ENCODE measurements at regions of chr1 and their contacts with region 1.

Region 1: GRCh38 chr1:218330043-218330623 is 15.0 kb upstream of the TGFB2 start:
- DNase-seq: peak in 4 of 9 donors; percentile 17 to 41 (median 32)
- ATAC-seq: peak; percentile 73
- H3K4me3 ChIP-seq: no peak overlapping the region
- H3K4me3 Mint-ChIP-seq: no peak overlapping the region
- H3K27ac ChIP-seq: no peak overlapping the region
- H3K27ac Mint-ChIP-seq: no peak overlapping the region
- H3K4me1 ChIP-seq: no peaks in the 10 kb centered on the region
- H3K4me1 Mint-ChIP-seq: peaks cover 0 to 3% (median 0%) of the 10 kb centered on the region in 7 donors
- H3K27me3 ChIP-seq: no peaks in the 10 kb centered on the region
- H3K27me3 Mint-ChIP-seq: no peaks in the 10 kb centered on the region

Region 2: GRCh38 chr1:218351391-218352074 is 21.4 kb after region 1 on chr1:
- CTCF ChIA-PET with region 1: no interaction called
- POLR2A ChIA-PET with region 1: no interaction called
- intact Hi-C with region 1: loop called in 1 of 2 experiments (anchors 2 kb)
- DNase-seq: peak in 6 of 9 donors; percentile 16 to 33 (median 20)
- ATAC-seq: peak; percentile 81
- H3K4me3 ChIP-seq: peak overlapping the region; percentile 32
- H3K4me3 Mint-ChIP-seq: peak overlapping the region; percentile 21 to 86 (median 70)
- H3K27ac ChIP-seq: no peak overlapping the region
- H3K27ac Mint-ChIP-seq: peak overlapping the region in 4 of 9 donors; percentile 7 to 54 (median 18)
- H3K4me1 ChIP-seq: peaks cover 0 to 7% of the 10 kb centered on the region in 2 donors
- H3K4me1 Mint-ChIP-seq: peaks cover 14 to 34% (median 30%) of the 10 kb centered on the region in 7 donors
- H3K27me3 ChIP-seq: no peaks in the 10 kb centered on the region
- H3K27me3 Mint-ChIP-seq: peaks cover 9 to 34% (median 26%) of the 10 kb centered on the region in 5 donors

Region 3: GRCh38 chr1:218521375-218522169 is 191.4 kb after region 1 on chr1:
- CTCF ChIA-PET with region 1: no interaction called
- POLR2A ChIA-PET with region 1: no interaction called
- intact Hi-C with region 1: loop called in 1 of 2 experiments (anchors 1 kb)
- DNase-seq: peak in 3 of 9 donors; percentile 2 to 24 (median 4)
- ATAC-seq: no peak
- H3K4me3 ChIP-seq: no peak overlapping the region
- H3K4me3 Mint-ChIP-seq: no peak overlapping the region
- H3K27ac ChIP-seq: no peak overlapping the region
- H3K27ac Mint-ChIP-seq: peak overlapping the region in 1 of 9 donors; percentile 75
- H3K4me1 ChIP-seq: no peaks in the 10 kb centered on the region
- H3K4me1 Mint-ChIP-seq: no peaks in the 10 kb centered on the region
- H3K27me3 ChIP-seq: no peaks in the 10 kb centered on the region
- H3K27me3 Mint-ChIP-seq: peaks cover 3 to 18% (median 5%) of the 10 kb centered on the region in 5 donors

Region 4: GRCh38 chr1:219416594-219417238 is 1086.6 kb after region 1 on chr1:
- CTCF ChIA-PET with region 1: interaction called, 5 read pairs
- POLR2A ChIA-PET with region 1: interaction called, 4 read pairs
- intact Hi-C with region 1: loop called in 1 of 2 experiments (anchors 1 kb)
- DNase-seq: peak; percentile 2 to 47 (median 25)
- ATAC-seq: peak; percentile 65
- H3K4me3 ChIP-seq: no peak overlapping the region
- H3K4me3 Mint-ChIP-seq: no peak overlapping the region
- H3K27ac ChIP-seq: no peak overlapping the region
- H3K27ac Mint-ChIP-seq: no peak overlapping the region
- H3K4me1 ChIP-seq: no peaks in the 10 kb centered on the region
- H3K4me1 Mint-ChIP-seq: no peaks in the 10 kb centered on the region
- H3K27me3 ChIP-seq: no peaks in the 10 kb centered on the region
- H3K27me3 Mint-ChIP-seq: peaks cover 0 to 4% (median 0%) of the 10 kb centered on the region in 5 donors

Region 5: GRCh38 chr1:219812491-219813203 is 1482.5 kb after region 1 on chr1:
- CTCF ChIA-PET with region 1: no interaction called
- POLR2A ChIA-PET with region 1: no interaction called
- intact Hi-C with region 1: loop called in 1 of 2 experiments (anchors 5 kb)
- DNase-seq: no peak
- ATAC-seq: no peak
- H3K4me3 ChIP-seq: no peak overlapping the region
- H3K4me3 Mint-ChIP-seq: no peak overlapping the region
- H3K27ac ChIP-seq: no peak overlapping the region
- H3K27ac Mint-ChIP-seq: no peak overlapping the region
- H3K4me1 ChIP-seq: no peaks in the 10 kb centered on the region
- H3K4me1 Mint-ChIP-seq: no peaks in the 10 kb centered on the region
- H3K27me3 ChIP-seq: no peaks in the 10 kb centered on the region
- H3K27me3 Mint-ChIP-seq: peaks cover 0 to 21% (median 16%) of the 10 kb centered on the region in 5 donors

Measured in naive thymus-derived CD4-positive, alpha-beta T cell (primary cell).